ENCODE measurements at regions of chr4 and their contacts with region 1.

Region 1: GRCh38 chr4:154807042-154807630 is 26.1 kb downstream of the RBM46 start:
- DNase-seq: peak; percentile 13
- ATAC-seq: no peak
- H3K4me3 ChIP-seq: no peak overlapping the region
- H3K27ac ChIP-seq: no peak overlapping the region
- H3K4me1 ChIP-seq: no peaks in the 10 kb centered on the region
- H3K27me3 ChIP-seq: no peaks in the 10 kb centered on the region
- CTCF ChIP-seq: peak; percentile 47; the same call in 1 of the 2 replicates

Region 2: DNA sequence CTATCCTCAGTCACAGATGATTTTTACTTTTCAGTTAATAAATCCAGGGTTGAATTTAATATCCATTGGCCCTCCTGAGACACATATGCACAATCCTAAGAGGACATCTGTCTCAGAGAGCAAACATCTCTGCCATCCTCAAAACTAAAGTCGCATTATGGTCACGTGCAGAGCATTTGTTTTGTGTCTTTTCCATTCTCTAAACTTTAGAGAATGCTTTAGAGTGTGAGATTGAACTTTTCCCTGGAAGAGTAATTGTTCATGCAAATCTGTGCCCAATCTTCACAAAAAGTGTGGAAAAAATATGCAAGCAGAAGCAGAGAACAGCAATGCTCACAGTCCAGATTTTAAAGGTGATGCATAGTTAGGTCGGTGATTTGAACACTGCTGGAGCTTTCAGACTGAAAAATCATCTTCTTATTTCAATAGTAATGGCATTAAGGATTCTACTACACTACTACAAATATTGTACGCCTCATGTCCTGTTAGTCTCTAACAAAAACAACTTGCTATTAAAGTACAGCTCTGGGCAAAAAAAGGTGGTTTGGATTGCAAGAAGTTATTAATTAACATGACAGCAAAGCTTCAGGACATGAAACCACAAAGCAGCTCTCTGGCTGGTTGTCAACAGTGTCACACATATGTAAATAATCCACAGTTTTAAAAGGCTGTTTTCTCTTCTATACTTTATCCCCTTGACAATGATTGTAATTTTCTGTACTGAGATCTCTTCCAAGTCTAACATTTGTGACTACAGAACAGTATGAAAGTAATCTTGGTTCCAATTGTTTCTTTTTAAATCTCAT is 335.4 kb before region 1 on chr4:
- CTCF ChIA-PET with region 1: no interaction called
- POLR2A ChIA-PET with region 1: no interaction called
- in situ Hi-C with region 1: no loop called
- intact Hi-C with region 1: no loop called
- DNase-seq: no peak
- ATAC-seq: no peak
- H3K4me3 ChIP-seq: no peak overlapping the region
- H3K27ac ChIP-seq: no peak overlapping the region
- H3K4me1 ChIP-seq: no peaks in the 10 kb centered on the region
- H3K27me3 ChIP-seq: no peaks in the 10 kb centered on the region
- CTCF ChIP-seq: no peak

Region 3: DNA sequence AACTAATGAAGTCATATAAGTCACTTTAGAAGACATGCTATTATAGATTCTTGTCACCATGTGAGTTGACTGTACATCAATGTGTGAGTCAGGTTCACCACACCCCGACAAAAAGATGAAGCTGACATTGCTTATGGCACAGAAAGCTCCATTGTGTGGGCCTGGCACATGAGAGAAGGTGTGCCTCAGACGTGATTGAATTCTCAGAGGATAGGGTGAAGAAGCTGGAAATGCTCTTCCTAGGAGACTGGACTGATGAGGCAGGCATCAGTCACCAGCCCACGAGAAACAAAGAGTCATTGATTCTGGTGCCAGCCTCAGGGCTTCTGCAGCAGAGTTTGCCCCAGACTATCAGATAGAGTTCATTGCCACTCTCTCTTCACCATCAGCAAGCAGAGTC is 99.3 kb before region 1 on chr4:
- CTCF ChIA-PET with region 1: no interaction called
- POLR2A ChIA-PET with region 1: no interaction called
- in situ Hi-C with region 1: no loop called
- intact Hi-C with region 1: no loop called
- DNase-seq: no peak
- ATAC-seq: no peak
- H3K4me3 ChIP-seq: no peak overlapping the region
- H3K27ac ChIP-seq: no peak overlapping the region
- H3K4me1 ChIP-seq: no peaks in the 10 kb centered on the region
- H3K27me3 ChIP-seq: no peaks in the 10 kb centered on the region
- CTCF ChIP-seq: no peak

Region 4: GRCh38 chr4:155371432-155372043 is 564.4 kb after region 1 on chr4:
- CTCF ChIA-PET with region 1: no interaction called
- POLR2A ChIA-PET with region 1: interaction called, 22 read pairs
- in situ Hi-C with region 1: no loop called
- intact Hi-C with region 1: loop called (anchors 2 kb)
- DNase-seq: no peak
- ATAC-seq: no peak
- H3K4me3 ChIP-seq: no peak overlapping the region
- H3K27ac ChIP-seq: no peak overlapping the region
- H3K4me1 ChIP-seq: no peaks in the 10 kb centered on the region; the same call in 1 of the 2 replicates
- H3K27me3 ChIP-seq: no peaks in the 10 kb centered on the region
- CTCF ChIP-seq: peak; percentile 19; the same call in 1 of the 2 replicates

Measured in Panc1 (cell line).